Heart left ventricle (tissue), 16 donors: ENCODE measurements at regions of chr6 and their contacts with region 1.

Region 1: GRCh38 chr6:158686791-158687381 is 37.0 kb downstream of the SYTL3 start:
- DNase-seq: no peak
- ATAC-seq: peak in 2 of 4 donors; percentile 45 to 47
- H3K4me3 ChIP-seq: no peak overlapping the region
- H3K27ac ChIP-seq: peak overlapping the region in 2 of 12 donors; percentile 41 to 75
- H3K4me1 ChIP-seq: peaks cover 0 to 24% (median 0%) of the 10 kb centered on the region in 12 donors
- H3K27me3 ChIP-seq: no peaks in the 10 kb centered on the region
- CTCF ChIP-seq: no peak
- POLR2A ChIP-seq: no peak

Region 2: DNA sequence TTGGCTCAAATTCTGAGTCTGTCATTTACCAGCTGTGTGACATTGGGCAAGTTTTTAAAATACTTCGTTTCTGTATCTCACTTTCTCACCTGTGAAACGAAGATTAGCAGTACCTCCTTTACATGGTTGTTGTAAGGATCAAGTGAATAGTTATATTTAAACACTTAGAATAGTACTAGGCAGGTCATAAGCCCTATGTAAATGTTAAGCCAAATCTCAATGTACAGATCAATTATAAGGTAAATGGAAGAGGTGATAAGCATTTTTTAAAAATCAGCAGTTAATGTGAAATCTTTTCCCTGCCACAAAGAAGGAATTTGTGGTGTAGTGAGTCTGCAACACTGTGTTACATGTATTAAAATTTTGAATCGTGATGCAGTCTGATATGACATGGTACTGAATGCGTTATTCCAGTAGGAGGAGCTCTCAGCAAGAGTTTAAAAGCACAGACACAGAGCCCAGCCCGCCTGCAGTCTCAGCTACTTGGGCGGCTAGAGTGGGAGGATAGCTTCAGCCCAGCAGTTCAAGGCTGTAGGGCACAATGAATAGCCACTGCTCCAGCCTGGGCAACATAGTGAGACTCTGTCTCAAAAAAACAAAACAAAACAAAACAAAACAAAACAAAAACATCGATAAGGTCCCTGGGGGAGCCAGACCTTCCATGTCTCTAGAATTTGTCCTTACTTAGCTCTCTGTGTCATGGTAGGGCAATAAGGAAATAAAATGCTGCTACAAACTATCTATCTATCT is 472.8 kb before region 1 on chr6:
- intact Hi-C with region 1: loop called in 4 of 10 experiments (anchors 2 to 10 kb)
- DNase-seq: peak; percentile 46 to 70 (median 58)
- ATAC-seq: peak; percentile 91 to 97 (median 95)
- H3K4me3 ChIP-seq: no peak overlapping the region
- H3K27ac ChIP-seq: no peak overlapping the region
- H3K4me1 ChIP-seq: peaks cover 0 to 1% (median 0%) of the 10 kb centered on the region in 12 donors
- H3K27me3 ChIP-seq: no peaks in the 10 kb centered on the region
- CTCF ChIP-seq: peak; percentile 56 to 80 (median 68)
- POLR2A ChIP-seq: no peak

Region 3: GRCh38 chr6:158631678-158632537 is 55.0 kb before region 1 on chr6:
- intact Hi-C with region 1: loop called in 7 of 10 experiments (anchors 1 to 10 kb)
- DNase-seq: peak; percentile 81 to 89 (median 86)
- ATAC-seq: peak; percentile 89 to 91 (median 90)
- H3K4me3 ChIP-seq: peak overlapping the region in 4 of 12 donors; percentile 0 to 30 (median 22)
- H3K27ac ChIP-seq: peak overlapping the region; percentile 24 to 88 (median 74)
- H3K4me1 ChIP-seq: peaks cover 0 to 38% (median 20%) of the 10 kb centered on the region in 12 donors
- H3K27me3 ChIP-seq: no peaks in the 10 kb centered on the region
- CTCF ChIP-seq: no peak
- POLR2A ChIP-seq: no peak